ENCODE measurements at regions of chr1 and their contacts with region 1.

Region 1: GRCh38 chr1:28886731-28887418 is 27.5 kb upstream of the EPB41 start:
- DNase-seq: peak; percentile 91
- H3K4me3 Mint-ChIP-seq: peak overlapping the region; percentile 85
- H3K27ac Mint-ChIP-seq: peak overlapping the region; percentile 95
- H3K4me1 Mint-ChIP-seq: peaks cover 66% of the 10 kb centered on the region
- H3K27me3 Mint-ChIP-seq: no peaks in the 10 kb centered on the region

Region 2: GRCh38 chr1:29033829-29034466 is 147.1 kb after region 1 on chr1:
- CTCF ChIA-PET with region 1: interaction called, 23 read pairs
- POLR2A ChIA-PET with region 1: no interaction called
- DNase-seq: peak; percentile 10
- H3K4me3 Mint-ChIP-seq: no peak overlapping the region
- H3K27ac Mint-ChIP-seq: no peak overlapping the region
- H3K4me1 Mint-ChIP-seq: no peaks in the 10 kb centered on the region
- H3K27me3 Mint-ChIP-seq: no peaks in the 10 kb centered on the region

Region 3: DNA sequence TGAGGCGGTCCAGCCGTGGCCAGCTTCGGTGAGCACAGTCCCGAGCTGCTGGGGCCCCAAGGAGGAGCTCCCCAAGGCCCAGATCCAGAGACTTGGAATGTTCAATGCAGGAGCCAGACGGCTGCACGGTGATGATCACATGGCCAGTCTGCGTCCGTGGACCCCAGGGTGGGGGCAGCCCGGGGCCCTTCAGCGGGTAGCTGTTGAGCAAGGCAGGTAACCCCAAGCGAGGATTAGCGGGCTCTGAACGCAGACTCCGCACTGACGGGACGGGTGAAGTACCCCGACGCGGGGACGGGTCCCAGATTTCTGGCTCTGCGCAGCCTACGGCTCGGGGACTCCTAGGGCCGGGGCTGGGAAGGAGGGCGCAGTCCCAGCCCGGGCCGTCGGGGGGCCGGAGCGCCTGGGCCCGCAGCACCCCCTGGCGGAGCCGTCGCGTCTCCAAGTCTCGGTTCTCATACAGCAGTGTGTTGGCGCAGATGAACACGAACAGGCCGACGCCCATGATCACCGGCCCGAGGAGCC is 234.1 kb after region 1 on chr1:
- CTCF ChIA-PET with region 1: interaction called, 11 read pairs
- POLR2A ChIA-PET with region 1: no interaction called
- DNase-seq: peak; percentile 69
- H3K4me3 Mint-ChIP-seq: no peak overlapping the region
- H3K27ac Mint-ChIP-seq: no peak overlapping the region
- H3K4me1 Mint-ChIP-seq: peaks cover 9% of the 10 kb centered on the region
- H3K27me3 Mint-ChIP-seq: peaks cover 30% of the 10 kb centered on the region

Region 4: GRCh38 chr1:29197585-29197924 is 310.7 kb after region 1 on chr1:
- CTCF ChIA-PET with region 1: interaction called, 22 read pairs
- POLR2A ChIA-PET with region 1: no interaction called
- DNase-seq: peak; percentile 64
- H3K4me3 Mint-ChIP-seq: no peak overlapping the region
- H3K27ac Mint-ChIP-seq: no peak overlapping the region
- H3K4me1 Mint-ChIP-seq: peaks cover 12% of the 10 kb centered on the region
- H3K27me3 Mint-ChIP-seq: no peaks in the 10 kb centered on the region

Region 5: DNA sequence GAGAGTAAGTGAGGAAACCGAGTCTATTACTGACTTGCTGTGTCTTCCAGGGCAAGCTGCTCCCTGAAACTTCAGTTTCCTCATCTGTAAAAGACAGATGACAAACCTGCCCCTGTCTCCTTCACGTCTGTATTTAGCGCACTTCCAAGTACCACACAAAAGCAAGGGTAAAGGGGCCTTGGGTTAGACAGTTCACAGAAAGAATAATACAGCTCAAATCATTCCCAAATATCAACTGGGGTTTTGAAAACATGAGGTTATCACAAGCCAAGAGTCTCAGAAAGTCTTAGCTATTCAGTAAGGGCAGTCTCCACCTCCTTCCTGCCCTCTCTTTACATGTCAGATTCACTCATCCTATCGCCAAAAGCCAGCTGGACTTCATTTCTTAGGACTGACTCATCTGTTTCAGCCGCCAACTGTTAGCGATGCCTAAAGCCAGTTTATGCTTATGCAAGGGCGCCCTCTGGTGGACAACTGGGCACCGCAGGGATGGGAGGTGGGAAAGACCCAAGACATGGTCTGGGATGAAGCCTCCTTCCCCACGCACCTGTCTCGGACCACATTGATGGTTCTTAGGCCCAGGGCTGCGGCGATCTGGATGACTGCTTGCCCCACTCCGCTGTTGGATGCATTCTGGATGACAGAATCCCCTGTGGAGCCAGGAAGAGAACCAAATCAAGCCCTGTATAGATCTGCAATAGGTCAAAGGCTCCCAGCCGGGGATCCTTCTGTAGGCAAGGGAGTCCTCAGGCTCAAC is 315.9 kb after region 1 on chr1:
- CTCF ChIA-PET with region 1: interaction called, 22 read pairs
- POLR2A ChIA-PET with region 1: no interaction called
- DNase-seq: peak; percentile 92
- H3K4me3 Mint-ChIP-seq: no peak overlapping the region
- H3K27ac Mint-ChIP-seq: no peak overlapping the region
- H3K4me1 Mint-ChIP-seq: peaks cover 12% of the 10 kb centered on the region
- H3K27me3 Mint-ChIP-seq: no peaks in the 10 kb centered on the region